Activated CD4-positive, alpha-beta memory T cell treated with anti-CD3 and anti-CD28 coated beads, Interleukin-2, amount 10 ng/mL, durations not matched to agents 7 days and 5 days (primary cell): ENCODE measurements at regions of chr10 and their contacts with region 1.

Region 1: DNA sequence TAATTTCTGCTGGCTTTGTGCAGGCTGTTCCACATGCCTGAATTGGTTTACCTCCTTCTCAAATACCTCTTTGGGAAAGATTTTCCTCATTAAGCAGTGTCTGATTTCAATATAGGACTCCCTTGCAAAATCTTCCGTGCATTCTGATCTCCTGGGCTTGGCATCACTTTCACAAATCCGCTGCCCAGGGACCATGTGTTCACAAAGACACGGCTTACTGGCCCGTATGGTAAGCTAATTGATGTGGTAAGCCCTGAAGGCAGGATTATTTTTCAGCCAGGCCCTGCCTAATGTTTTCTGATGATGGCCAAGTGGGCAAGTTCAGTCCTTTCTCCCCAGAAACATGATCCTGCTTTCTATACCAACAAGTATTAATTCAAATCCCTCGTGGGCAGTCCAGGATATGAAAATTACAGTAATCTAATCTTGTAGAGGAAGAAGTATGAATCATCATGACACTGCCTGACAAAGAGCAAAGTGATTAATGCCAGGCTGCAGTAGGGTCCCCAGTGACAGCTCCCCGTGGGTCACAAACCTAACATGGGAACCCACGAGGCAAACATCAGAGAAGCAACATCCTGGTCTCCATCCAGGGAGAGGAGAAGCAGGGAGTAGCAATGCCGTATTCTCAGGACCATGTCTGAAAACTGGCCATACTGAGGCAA is 11.6 kb upstream of the SVIL start:
- DNase-seq: no peak
- H3K4me3 Mint-ChIP-seq: no peak overlapping the region
- H3K27ac Mint-ChIP-seq: no peak overlapping the region
- H3K4me1 Mint-ChIP-seq: peaks cover 34% of the 10 kb centered on the region
- H3K27me3 Mint-ChIP-seq: peaks cover 13% of the 10 kb centered on the region

Region 2: GRCh38 chr10:29658984-29659965 is 12.9 kb after region 1 on chr10:
- CTCF ChIA-PET with region 1: no interaction called
- POLR2A ChIA-PET with region 1: interaction called, 20 read pairs
- DNase-seq: peak; percentile 73
- H3K4me3 Mint-ChIP-seq: peak overlapping the region; percentile 46
- H3K27ac Mint-ChIP-seq: peak overlapping the region; percentile 71
- H3K4me1 Mint-ChIP-seq: peaks cover 33% of the 10 kb centered on the region
- H3K27me3 Mint-ChIP-seq: peaks cover 32% of the 10 kb centered on the region